ENCODE measurements at regions of chr17 and their contacts with region 1.

Region 1: GRCh38 chr17:75679706-75680442 is 12.7 kb downstream of the SAP30BP start:
- DNase-seq: peak; percentile 70
- H3K4me3 ChIP-seq: no peak overlapping the region
- H3K27ac ChIP-seq: peak overlapping the region; percentile 77
- H3K4me1 ChIP-seq: peaks cover 52% of the 10 kb centered on the region
- H3K27me3 ChIP-seq: no peaks in the 10 kb centered on the region
- CTCF ChIP-seq: peak; percentile 37 to 65

Region 2: GRCh38 chr17:75565068-75565467 is 114.8 kb before region 1 on chr17:
- CTCF ChIA-PET with region 1: no interaction called
- dilution Hi-C with region 1: no loop called
- in situ Hi-C with region 1: no loop called
- intact Hi-C with region 1: no loop called
- DNase-seq: peak; percentile 73
- H3K4me3 ChIP-seq: no peak overlapping the region
- H3K27ac ChIP-seq: no peak overlapping the region
- H3K4me1 ChIP-seq: peaks cover 5% of the 10 kb centered on the region
- H3K27me3 ChIP-seq: no peaks in the 10 kb centered on the region
- CTCF ChIP-seq: no peak

Region 3: DNA sequence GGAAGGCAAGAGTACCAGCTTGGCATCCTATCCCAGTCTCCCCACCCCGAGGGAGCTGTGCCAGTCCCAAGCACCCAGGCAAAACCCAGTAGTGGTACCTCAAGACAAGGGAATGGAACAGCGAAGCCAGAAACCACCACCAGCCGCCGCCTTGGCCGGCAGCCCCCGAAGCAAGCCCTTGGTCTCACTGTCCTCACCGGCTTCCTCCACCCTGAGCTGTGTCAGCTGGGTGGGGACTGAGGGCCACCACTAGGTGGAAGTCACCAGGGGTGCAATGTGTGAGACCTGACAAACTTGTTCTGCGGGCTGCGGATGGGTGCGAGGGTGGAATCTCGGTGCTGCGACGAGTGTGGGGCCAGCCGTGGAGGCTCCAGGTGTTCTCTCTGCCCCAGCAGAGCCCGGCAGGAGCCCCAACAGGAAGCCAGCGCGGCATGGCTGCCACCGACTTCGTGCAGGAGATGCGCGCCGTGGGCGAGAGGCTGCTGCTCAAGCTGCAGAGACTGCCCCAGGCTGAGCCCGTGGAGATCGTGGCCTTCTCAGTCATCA is 40.0 kb before region 1 on chr17:
- CTCF ChIA-PET with region 1: no interaction called
- dilution Hi-C with region 1: loop called (anchors 5 kb)
- in situ Hi-C with region 1: no loop called
- intact Hi-C with region 1: no loop called
- DNase-seq: no peak
- H3K4me3 ChIP-seq: no peak overlapping the region
- H3K27ac ChIP-seq: no peak overlapping the region
- H3K4me1 ChIP-seq: no peaks in the 10 kb centered on the region
- H3K27me3 ChIP-seq: no peaks in the 10 kb centered on the region
- CTCF ChIP-seq: no peak

Region 4: GRCh38 chr17:75693500-75694481 is 13.9 kb after region 1 on chr17:
- CTCF ChIA-PET with region 1: no interaction called
- dilution Hi-C with region 1: no loop called
- in situ Hi-C with region 1: no loop called
- intact Hi-C with region 1: no loop called
- DNase-seq: peak; percentile 93
- H3K4me3 ChIP-seq: no peak overlapping the region
- H3K27ac ChIP-seq: peak overlapping the region; percentile 90
- H3K4me1 ChIP-seq: peaks cover 97% of the 10 kb centered on the region
- H3K27me3 ChIP-seq: no peaks in the 10 kb centered on the region
- CTCF ChIP-seq: peak; percentile 2 to 31

Region 5: GRCh38 chr17:75720725-75721462 is 41.0 kb after region 1 on chr17 and contains the start of gene ITGB4:
- CTCF ChIA-PET with region 1: interaction called, 4 read pairs
- dilution Hi-C with region 1: loop called (anchors 5 kb)
- in situ Hi-C with region 1: no loop called
- intact Hi-C with region 1: loop called (anchors 1 kb)
- DNase-seq: peak; percentile 92
- H3K4me3 ChIP-seq: peak within 1 kb of the TSS; percentile 72 to 98 (median 95)
- H3K27ac ChIP-seq: peak within 1 kb of the TSS; percentile 82
- H3K4me1 ChIP-seq: peaks cover 25% of the 10 kb centered on the region
- H3K27me3 ChIP-seq: no peaks in the 10 kb centered on the region
- CTCF ChIP-seq: no peak
- total RNA-seq, gene ITGB4: 2,525 to 2,618 TPM

Region 6: DNA sequence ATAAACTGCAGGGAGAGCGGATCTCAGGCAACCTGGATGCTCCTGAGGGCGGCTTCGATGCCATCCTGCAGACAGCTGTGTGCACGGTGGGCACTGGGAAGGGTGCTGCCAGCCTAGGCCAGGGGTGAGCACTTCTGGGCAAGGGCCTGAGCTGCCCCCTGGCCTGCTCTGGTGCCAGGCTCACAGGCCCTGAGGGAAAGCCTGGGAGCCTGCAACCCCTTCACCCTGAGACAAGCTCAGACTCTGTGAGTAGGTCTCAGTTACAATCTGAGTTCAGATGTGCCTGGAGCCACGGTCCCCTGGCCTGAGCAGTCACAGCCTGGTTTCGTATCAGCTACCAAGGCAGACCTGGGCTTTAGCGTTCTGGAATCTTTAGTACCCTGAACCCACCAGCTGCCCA is 49.5 kb after region 1 on chr17:
- CTCF ChIA-PET with region 1: no interaction called
- dilution Hi-C with region 1: loop called (anchors 5 kb)
- in situ Hi-C with region 1: no loop called
- intact Hi-C with region 1: no loop called
- DNase-seq: no peak
- H3K4me3 ChIP-seq: no peak overlapping the region
- H3K27ac ChIP-seq: no peak overlapping the region
- H3K4me1 ChIP-seq: peaks cover 6% of the 10 kb centered on the region
- H3K27me3 ChIP-seq: no peaks in the 10 kb centered on the region
- CTCF ChIP-seq: no peak

Region 7: GRCh38 chr17:75749545-75750389 is 69.9 kb after region 1 on chr17:
- CTCF ChIA-PET with region 1: interaction called, 3 read pairs
- dilution Hi-C with region 1: no loop called
- in situ Hi-C with region 1: loop called (anchors 5 to 10 kb)
- intact Hi-C with region 1: loop called (anchors 1 kb)
- DNase-seq: no peak
- H3K4me3 ChIP-seq: no peak overlapping the region
- H3K27ac ChIP-seq: no peak overlapping the region
- H3K4me1 ChIP-seq: peaks cover 3% of the 10 kb centered on the region
- H3K27me3 ChIP-seq: no peaks in the 10 kb centered on the region
- CTCF ChIP-seq: peak; percentile 52 to 77

Region 8: GRCh38 chr17:75764711-75765421 is 85.0 kb after region 1 on chr17 and contains the start of gene GALK1:
- CTCF ChIA-PET with region 1: interaction called, 31 read pairs
- dilution Hi-C with region 1: no loop called
- in situ Hi-C with region 1: no loop called
- intact Hi-C with region 1: no loop called
- DNase-seq: peak; percentile 76
- H3K4me3 ChIP-seq: peak within 1 kb of the TSS; percentile 45 to 57 (median 47)
- H3K27ac ChIP-seq: peak within 1 kb of the TSS; percentile 20
- H3K4me1 ChIP-seq: peaks cover 9% of the 10 kb centered on the region
- H3K27me3 ChIP-seq: no peaks in the 10 kb centered on the region
- CTCF ChIP-seq: peak; percentile 6 to 74
- total RNA-seq, gene GALK1: 1.5 to 3.0 TPM

Region 9: DNA sequence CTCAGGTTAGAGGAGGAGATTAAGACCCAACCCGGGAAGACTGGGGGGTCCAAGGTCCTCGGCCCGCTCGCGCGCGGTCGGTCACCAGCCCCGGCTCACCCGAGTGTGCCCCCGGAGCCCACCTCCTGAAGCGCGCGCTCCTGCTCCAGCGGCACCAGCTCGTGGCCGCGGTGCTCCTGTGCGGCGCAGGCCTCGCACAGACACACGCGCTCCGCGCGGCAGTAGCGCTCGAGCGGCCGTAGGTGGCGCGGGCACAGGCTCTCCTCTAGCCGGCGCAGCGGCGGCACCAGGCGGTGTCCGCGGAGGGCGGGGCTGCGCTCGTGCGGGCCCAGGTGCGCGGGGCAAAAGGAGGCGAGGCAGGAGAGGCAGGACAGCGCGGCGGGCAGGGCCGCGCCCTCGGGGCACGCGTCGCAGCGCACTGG is 197.9 kb after region 1 on chr17:
- CTCF ChIA-PET with region 1: no interaction called
- dilution Hi-C with region 1: no loop called
- in situ Hi-C with region 1: no loop called
- intact Hi-C with region 1: loop called (anchors 10 kb)
- DNase-seq: peak; percentile 76
- H3K4me3 ChIP-seq: peak overlapping the region; percentile 64 to 67 (median 65)
- H3K27ac ChIP-seq: peak overlapping the region; percentile 76
- H3K4me1 ChIP-seq: peaks cover 34% of the 10 kb centered on the region
- H3K27me3 ChIP-seq: no peaks in the 10 kb centered on the region
- CTCF ChIP-seq: peak; percentile 30 to 64

Measured in mammary epithelial cell (primary cell).